ENCODE measurements at regions of chr5 and their contacts with region 1.

Region 1: GRCh38 chr5:168219515-168220410 is 71.7 kb upstream of the WWC1 start:
- DNase-seq: peak; percentile 89
- H3K4me3 Mint-ChIP-seq: no peak overlapping the region
- H3K27ac Mint-ChIP-seq: peak overlapping the region; percentile 37
- H3K4me1 Mint-ChIP-seq: no peaks in the 10 kb centered on the region
- H3K27me3 Mint-ChIP-seq: peaks cover 31% of the 10 kb centered on the region
- CTCF ChIP-seq: peak; percentile 90

Region 2: GRCh38 chr5:167582283-167582682 is 637.5 kb before region 1 on chr5:
- CTCF ChIA-PET with region 1: interaction called, 42 read pairs
- POLR2A ChIA-PET with region 1: no interaction called
- intact Hi-C with region 1: loop called (anchors 1 kb)
- DNase-seq: peak; percentile 52
- H3K4me3 Mint-ChIP-seq: no peak overlapping the region
- H3K27ac Mint-ChIP-seq: no peak overlapping the region
- H3K4me1 Mint-ChIP-seq: peaks cover 2% of the 10 kb centered on the region
- H3K27me3 Mint-ChIP-seq: peaks cover 33% of the 10 kb centered on the region
- CTCF ChIP-seq: peak; percentile 68

Region 3: DNA sequence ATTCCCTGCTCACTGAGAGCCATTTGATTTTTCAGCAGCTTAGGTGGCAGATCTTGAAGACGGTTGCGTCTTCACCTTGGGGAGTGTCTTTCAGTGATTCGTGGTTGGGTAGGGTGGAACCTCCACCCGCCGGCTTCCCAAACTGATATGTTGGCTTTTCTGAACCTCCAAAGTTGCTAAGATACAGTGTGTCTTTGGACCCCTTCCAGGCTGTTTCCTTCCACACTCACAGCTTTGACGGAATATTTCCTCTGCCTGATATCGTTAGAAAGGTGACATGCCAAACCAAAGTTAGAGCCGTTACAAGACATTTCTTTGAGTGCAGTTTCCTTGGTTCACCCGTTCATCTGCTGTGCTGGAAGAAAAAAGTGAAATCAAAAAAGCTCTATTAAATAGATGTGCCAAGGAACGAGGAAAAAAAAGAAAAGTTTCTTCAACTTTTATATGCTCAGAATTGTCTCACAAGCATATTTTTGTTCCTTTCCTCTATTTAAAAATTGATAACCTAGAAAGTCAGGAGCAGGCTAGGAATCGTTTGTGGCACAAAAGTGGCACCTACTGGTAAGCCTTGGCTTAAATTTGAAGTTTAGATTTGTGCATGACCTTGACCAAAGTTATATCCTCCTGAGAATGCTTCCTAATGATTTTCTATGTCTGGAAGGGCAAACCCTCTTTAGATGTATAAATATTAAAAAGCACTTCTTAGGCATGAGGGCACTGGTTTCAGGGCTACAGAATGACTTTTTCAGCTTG is 199.0 kb before region 1 on chr5:
- CTCF ChIA-PET with region 1: interaction called, 4 read pairs
- POLR2A ChIA-PET with region 1: no interaction called
- intact Hi-C with region 1: loop called (anchors 1 kb)
- DNase-seq: peak; percentile 31
- H3K4me3 Mint-ChIP-seq: no peak overlapping the region
- H3K27ac Mint-ChIP-seq: no peak overlapping the region
- H3K4me1 Mint-ChIP-seq: no peaks in the 10 kb centered on the region
- H3K27me3 Mint-ChIP-seq: no peaks in the 10 kb centered on the region
- CTCF ChIP-seq: peak; percentile 59

Region 4: DNA sequence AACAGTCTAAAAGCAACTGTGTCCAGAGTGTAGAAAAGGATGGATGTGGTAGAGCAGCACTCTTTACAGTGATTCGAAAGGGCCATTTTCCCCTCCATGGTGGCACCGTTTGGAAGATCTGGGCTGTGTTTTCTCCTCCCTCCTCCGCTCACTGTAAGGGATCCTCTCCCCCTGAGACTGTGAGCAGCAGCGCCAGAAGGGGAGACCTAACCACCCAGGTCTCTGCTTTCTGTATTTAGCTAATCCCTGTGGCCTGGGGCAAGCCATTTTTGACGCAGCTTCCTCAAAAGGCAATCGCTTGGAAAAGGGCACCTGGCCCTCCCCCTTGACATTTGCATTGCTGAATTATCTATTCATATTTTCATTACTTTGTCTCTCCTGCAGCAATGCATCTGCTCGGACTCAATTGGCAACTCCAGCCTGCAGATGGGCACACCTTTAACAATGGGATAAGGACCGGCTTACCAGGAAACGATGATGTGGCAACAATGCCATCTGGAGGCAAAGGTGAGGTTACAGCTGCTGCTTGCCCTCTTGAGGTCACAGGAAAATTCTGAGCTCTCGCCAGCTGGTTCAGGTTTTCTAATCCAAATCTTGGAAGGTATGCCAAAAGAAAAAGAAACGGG is 172.6 kb before region 1 on chr5:
- CTCF ChIA-PET with region 1: interaction called, 41 read pairs
- POLR2A ChIA-PET with region 1: no interaction called
- intact Hi-C with region 1: loop called (anchors 2 kb)
- DNase-seq: peak; percentile 89
- H3K4me3 Mint-ChIP-seq: no peak overlapping the region
- H3K27ac Mint-ChIP-seq: no peak overlapping the region
- H3K4me1 Mint-ChIP-seq: peaks cover 11% of the 10 kb centered on the region
- H3K27me3 Mint-ChIP-seq: peaks cover 34% of the 10 kb centered on the region
- CTCF ChIP-seq: peak; percentile 88

Region 5: DNA sequence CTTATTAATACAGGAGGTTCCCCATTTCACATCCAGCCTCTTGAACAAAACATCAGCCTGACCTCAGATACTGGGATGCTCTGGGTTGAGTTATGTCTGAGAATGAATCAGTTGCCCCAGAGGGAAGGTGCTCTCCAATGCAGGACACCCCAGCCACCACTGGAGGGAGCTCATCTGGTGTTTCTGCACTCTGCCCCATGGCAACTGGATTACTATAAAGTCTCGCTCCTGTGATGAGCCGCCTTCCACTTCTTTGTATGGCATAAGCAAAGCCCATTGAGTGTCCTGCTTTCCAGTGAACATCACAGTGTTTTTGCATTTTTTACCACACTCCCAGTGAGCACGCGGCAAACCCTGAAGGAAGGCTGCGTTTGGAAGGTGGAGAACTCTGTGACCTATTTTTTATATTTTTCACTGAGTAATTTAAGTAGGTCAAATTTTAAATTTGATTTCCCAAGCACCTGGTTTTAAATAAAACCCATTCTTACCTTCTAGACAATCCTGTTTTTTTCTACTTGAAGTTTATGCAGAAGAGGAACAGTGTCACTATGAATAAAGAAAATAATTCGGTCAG is 105.2 kb before region 1 on chr5:
- CTCF ChIA-PET with region 1: interaction called, 22 read pairs
- POLR2A ChIA-PET with region 1: no interaction called
- intact Hi-C with region 1: loop called (anchors 1 kb)
- DNase-seq: peak; percentile 82
- H3K4me3 Mint-ChIP-seq: no peak overlapping the region
- H3K27ac Mint-ChIP-seq: no peak overlapping the region
- H3K4me1 Mint-ChIP-seq: peaks cover 5% of the 10 kb centered on the region
- H3K27me3 Mint-ChIP-seq: peaks cover 39% of the 10 kb centered on the region
- CTCF ChIP-seq: peak; percentile 89

Region 6: DNA sequence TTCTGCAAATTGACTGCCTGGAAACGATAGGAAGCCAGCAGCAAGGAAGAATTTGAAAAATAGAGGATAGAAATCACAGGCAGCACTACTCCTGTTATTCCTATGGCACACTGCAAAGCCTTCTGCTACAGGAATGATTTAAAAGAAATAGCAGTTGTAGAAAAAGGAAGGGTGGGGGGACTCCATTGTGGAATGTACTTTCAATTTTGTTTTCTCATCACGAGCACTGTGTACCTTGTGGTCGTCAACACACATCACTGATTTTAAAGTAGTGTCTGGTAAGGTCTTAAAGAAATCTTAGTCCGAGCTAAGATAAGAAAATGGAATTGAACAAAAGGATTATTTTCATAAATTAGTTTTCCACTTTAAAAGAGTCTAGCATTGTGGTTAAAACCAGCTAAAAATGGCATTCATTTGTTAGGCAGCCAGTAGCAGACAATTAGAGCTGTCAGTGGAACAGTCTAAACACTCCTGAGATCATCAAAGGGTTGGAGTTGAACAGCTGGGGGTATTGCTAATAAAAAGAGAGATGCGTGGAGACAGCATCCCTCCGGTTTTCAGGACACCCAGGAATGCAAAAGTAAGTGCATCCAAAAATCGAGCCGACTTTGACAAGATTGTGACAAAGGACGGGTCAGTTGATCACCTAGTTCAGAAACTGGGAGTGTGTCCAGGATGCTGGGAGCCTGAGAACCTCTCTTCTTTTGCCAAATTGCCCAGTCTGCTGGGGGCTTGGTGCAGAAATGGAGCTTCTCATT is 26.1 kb before region 1 on chr5:
- CTCF ChIA-PET with region 1: interaction called, 37 read pairs
- POLR2A ChIA-PET with region 1: no interaction called
- intact Hi-C with region 1: no loop called
- DNase-seq: no peak
- H3K4me3 Mint-ChIP-seq: no peak overlapping the region
- H3K27ac Mint-ChIP-seq: no peak overlapping the region
- H3K4me1 Mint-ChIP-seq: no peaks in the 10 kb centered on the region
- H3K27me3 Mint-ChIP-seq: no peaks in the 10 kb centered on the region
- CTCF ChIP-seq: no peak

Region 7: GRCh38 chr5:168209244-168209995 is 10.3 kb before region 1 on chr5:
- CTCF ChIA-PET with region 1: interaction called, 20 read pairs
- POLR2A ChIA-PET with region 1: interaction called, 3 read pairs
- intact Hi-C with region 1: no loop called
- DNase-seq: no peak
- H3K4me3 Mint-ChIP-seq: no peak overlapping the region
- H3K27ac Mint-ChIP-seq: no peak overlapping the region
- H3K4me1 Mint-ChIP-seq: no peaks in the 10 kb centered on the region
- H3K27me3 Mint-ChIP-seq: no peaks in the 10 kb centered on the region
- CTCF ChIP-seq: no peak

Region 8: DNA sequence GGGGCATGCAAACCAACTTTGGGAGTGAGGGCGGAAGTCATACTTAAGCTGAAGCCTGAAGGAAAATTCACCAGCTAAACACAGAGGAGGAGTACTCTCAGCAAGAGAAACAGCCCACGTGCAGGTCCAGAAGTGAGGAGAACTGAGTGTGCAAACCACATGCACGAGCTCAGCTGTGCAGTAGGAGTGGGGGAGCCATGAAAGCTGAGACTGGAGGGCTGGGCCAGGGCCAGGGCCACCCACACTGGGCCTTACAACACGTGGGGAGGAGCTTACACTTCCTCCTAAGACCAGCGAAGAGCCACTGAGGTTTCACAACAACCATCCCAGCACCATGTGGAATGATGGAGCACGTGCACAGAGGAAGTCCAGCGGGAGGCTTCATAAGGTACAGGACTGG is 62.4 kb after region 1 on chr5:
- CTCF ChIA-PET with region 1: no interaction called
- POLR2A ChIA-PET with region 1: no interaction called
- intact Hi-C with region 1: no loop called
- DNase-seq: peak; percentile 85
- H3K4me3 Mint-ChIP-seq: no peak overlapping the region
- H3K27ac Mint-ChIP-seq: no peak overlapping the region
- H3K4me1 Mint-ChIP-seq: peaks cover 8% of the 10 kb centered on the region
- H3K27me3 Mint-ChIP-seq: no peaks in the 10 kb centered on the region
- CTCF ChIP-seq: no peak